Activated T-helper 2 cell treated with anti-CD3 and anti-CD28 coated beads, Interferon-gamma antibody, Interleukin-2, Interleukin-4, amounts not matched to agents 10 μg/mL and 5 μg/mL and 100 μg/mL, durations not matched to agents 14 hours and 24 hours and 36 hours (primary cell): ENCODE measurements at regions of chr1 and their contacts with region 1.

Region 1: DNA sequence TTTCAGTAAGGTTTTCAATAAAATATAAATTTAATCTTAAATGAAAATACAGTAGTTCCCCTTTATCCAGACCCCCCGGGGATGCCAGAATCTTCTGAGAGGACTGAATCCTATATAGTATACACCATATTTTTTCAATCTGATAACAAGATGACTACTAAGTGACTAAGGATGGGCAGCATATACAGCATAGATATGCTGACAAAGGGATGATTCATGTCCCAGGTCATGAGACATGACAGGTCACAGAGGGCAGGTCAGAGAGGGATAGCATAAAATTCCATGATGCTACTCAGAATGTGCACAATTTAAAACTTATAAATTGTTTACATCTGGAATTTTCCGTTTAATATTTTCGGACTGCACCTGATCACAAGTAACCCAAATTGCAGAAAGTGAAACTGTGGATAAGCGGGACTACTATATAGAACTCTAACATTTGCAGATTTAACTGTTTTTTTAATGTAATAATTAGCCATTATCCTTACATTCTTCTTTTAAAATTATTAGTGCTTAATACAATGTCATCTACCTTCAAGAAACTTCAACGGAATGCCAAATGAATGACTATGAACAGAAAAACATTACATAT is 48.8 kb downstream of the LRRC40 start:
- DNase-seq: no peak
- H3K4me3 Mint-ChIP-seq: no peak overlapping the region
- H3K27ac Mint-ChIP-seq: no peak overlapping the region
- H3K4me1 Mint-ChIP-seq: peaks cover 3% of the 10 kb centered on the region
- H3K27me3 Mint-ChIP-seq: no peaks in the 10 kb centered on the region

Region 2: DNA sequence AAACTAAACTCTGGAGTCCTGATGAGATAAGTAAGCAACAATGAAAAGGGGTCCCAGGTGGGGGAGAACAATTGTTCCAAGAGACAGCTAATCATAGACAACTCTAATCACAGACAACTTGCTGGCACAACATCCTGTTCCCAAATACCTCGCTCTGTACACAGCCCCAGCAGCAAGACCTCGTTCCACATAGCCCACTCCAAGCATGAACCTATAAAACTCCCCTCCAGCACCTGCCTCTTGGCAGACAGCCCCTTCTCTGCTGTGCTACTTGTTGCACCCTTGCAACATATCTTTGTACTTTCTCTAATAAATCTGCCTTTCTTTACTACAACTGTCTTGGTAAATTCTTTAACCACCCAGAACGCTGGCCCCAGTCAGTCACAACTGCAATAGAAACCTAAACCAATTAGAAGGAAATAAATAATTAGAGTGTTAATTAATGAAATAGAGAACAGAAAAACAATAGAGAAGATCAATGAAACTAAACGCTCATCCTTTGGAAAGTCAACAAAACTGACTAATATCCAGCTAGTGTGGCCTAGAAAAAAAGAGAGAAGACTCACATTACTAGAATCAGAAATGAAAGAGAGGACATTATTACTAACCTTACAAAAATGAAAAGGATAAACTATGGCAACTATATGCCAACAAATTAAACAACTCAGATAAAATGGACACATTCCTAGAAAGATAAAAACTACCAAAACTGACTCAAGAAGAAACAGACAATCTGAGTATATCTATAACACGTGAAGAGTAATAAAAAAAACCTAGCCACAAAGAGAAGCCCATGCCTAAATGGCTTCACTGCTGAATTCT is 12.6 kb after region 1 on chr1:
- intact Hi-C with region 1: loop called (anchors 1 kb)
- DNase-seq: no peak
- H3K4me3 Mint-ChIP-seq: no peak overlapping the region
- H3K27ac Mint-ChIP-seq: no peak overlapping the region
- H3K4me1 Mint-ChIP-seq: peaks cover 10% of the 10 kb centered on the region
- H3K27me3 Mint-ChIP-seq: no peaks in the 10 kb centered on the region